A549 (cell line): ENCODE measurements at regions of chr1 and their contacts with region 1.

Region 1: GRCh38 chr1:6448749-6449631 is 17.0 kb downstream of the TNFRSF25 start:
- DNase-seq: no peak
- ATAC-seq: peak; percentile 11 to 38; a peak in 4 of 6 replicates
- H3K4me3 ChIP-seq: peak overlapping the region; percentile 19; the same call in 2 of the 3 replicates
- H3K27ac ChIP-seq: peak overlapping the region in 1 of 2 experiments; percentile 57; a peak in 2 of 6 replicates
- H3K4me1 ChIP-seq: 0 out of 3 replicates have a peak, but pooled peaks cover 2% of the 10 kb centered on the region
- CTCF ChIP-seq: no peak
- EP300 ChIP-seq: no peak
- POLR2A ChIP-seq: no peak
- RAD21 ChIP-seq: no peak

Region 2: DNA sequence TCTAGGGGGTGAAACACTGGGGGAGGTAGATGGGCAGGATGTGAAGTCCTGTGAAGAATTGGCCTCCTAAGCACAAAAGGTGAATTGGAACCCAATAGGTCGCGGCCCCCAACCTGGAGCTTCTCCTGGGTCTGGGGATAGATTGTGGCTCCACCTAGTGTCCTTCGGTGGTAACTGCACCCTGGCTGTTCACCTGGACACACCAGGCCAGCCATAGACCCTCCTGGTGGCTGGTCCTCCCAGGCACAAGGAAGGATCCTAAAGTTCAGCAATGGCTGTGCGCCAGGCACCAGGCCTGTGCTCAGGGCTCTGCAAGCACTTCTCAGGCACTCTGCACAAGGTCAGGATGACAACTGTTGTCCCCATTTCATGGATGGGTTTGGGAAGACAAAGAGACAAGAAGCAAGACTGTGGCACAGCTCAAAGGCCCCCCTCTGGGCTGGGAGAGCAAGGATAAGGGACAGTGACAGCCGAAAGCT is 10.9 kb before region 1 on chr1:
- CTCF ChIA-PET with region 1: interaction called, 16 read pairs
- POLR2A ChIA-PET with region 1: no interaction called
- DNase-seq: peak; percentile 73 to 76
- ATAC-seq: peak; percentile 74 to 83
- H3K4me3 ChIP-seq: no peak overlapping the region
- H3K27ac ChIP-seq: no peak overlapping the region
- H3K4me1 ChIP-seq: peaks cover 5% of the 10 kb centered on the region; the same call in 1 of the 3 replicates
- CTCF ChIP-seq: peak; percentile 56
- EP300 ChIP-seq: no peak
- POLR2A ChIP-seq: no peak
- RAD21 ChIP-seq: peak; percentile 50 to 51; a peak in 4 of 5 replicates